Mammary epithelial cell (primary cell): ENCODE measurements at regions of chr3 and their contacts with region 1.

Region 1: DNA sequence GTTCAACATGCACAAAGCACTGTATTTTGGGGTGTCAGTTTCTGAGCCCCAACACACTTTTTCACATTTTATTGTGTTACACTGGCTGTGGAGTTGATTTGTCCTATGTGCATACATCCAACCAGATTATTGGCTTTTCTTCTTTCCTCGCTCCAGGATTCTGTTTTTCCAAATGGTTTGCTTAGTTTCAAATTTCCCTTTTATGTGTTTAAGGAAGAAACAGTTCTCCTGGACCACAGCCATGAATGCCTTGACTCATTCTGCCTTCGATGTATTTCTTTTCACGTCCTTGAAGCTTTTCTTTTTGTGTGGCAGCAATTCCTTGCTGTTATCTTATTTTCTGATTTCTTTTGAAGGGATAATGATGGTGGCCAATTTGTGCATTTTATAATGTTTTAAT is 53.8 kb downstream of the CACNA2D3 start:
- DNase-seq: no peak
- H3K4me3 ChIP-seq: no peak overlapping the region
- H3K27ac ChIP-seq: no peak overlapping the region
- H3K4me1 ChIP-seq: no peaks in the 10 kb centered on the region
- H3K27me3 ChIP-seq: no peaks in the 10 kb centered on the region
- CTCF ChIP-seq: no peak

Region 2: GRCh38 chr3:54104084-54104483 is 72.0 kb before region 1 on chr3:
- CTCF ChIA-PET with region 1: no interaction called
- dilution Hi-C with region 1: no loop called
- in situ Hi-C with region 1: no loop called
- intact Hi-C with region 1: no loop called
- DNase-seq: no peak
- H3K4me3 ChIP-seq: no peak overlapping the region
- H3K27ac ChIP-seq: no peak overlapping the region
- H3K4me1 ChIP-seq: no peaks in the 10 kb centered on the region
- H3K27me3 ChIP-seq: no peaks in the 10 kb centered on the region
- CTCF ChIP-seq: no peak

Region 3: DNA sequence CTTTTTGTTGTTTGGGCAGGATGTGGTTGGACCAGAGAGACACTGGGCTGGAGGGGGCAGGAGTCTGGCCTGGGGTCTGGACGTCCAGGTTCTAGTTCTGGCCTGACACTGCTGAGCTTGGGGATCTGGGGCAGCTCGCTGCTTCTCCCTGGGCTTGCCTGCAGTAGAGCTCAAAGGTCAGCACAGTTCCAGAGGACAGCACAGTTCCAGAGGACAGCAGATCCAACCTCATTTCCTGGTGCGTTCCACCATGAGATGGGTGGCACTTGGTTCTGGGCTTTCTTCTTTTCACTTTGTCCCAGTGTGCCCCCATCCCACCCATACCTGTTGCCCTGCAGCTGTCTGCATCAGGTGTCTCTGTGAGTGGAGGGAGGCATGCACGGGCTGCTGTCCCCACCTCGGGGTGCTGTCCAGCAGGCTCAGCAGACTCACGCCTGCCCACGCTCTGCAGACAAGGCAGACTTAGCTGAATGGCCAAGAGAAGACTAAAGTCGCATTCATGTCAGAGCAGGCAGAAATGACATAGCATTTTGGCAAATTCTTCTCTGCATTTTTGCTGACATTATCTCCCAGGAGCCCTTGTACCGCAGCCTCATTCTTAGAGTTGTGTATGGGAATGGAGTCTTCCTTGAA is 37.1 kb before region 1 on chr3:
- CTCF ChIA-PET with region 1: no interaction called
- dilution Hi-C with region 1: loop called (anchors 5 kb)
- in situ Hi-C with region 1: no loop called
- intact Hi-C with region 1: no loop called
- DNase-seq: peak; percentile 4
- H3K4me3 ChIP-seq: no peak overlapping the region
- H3K27ac ChIP-seq: no peak overlapping the region
- H3K4me1 ChIP-seq: no peaks in the 10 kb centered on the region
- H3K27me3 ChIP-seq: peaks cover 2% of the 10 kb centered on the region
- CTCF ChIP-seq: no peak